Calu3 (cell line): ENCODE measurements at regions of chr17 and their contacts with region 1.

Region 1: GRCh38 chr17:6279659-6280058 is 155.3 kb downstream of the AIPL1 start:
- DNase-seq: peak; percentile 55
- H3K4me3 Mint-ChIP-seq: no peak overlapping the region
- H3K27ac Mint-ChIP-seq: no peak overlapping the region
- H3K4me1 Mint-ChIP-seq: no peaks in the 10 kb centered on the region
- H3K27me3 Mint-ChIP-seq: peaks cover 90% of the 10 kb centered on the region
- CTCF ChIP-seq: no peak

Region 2: DNA sequence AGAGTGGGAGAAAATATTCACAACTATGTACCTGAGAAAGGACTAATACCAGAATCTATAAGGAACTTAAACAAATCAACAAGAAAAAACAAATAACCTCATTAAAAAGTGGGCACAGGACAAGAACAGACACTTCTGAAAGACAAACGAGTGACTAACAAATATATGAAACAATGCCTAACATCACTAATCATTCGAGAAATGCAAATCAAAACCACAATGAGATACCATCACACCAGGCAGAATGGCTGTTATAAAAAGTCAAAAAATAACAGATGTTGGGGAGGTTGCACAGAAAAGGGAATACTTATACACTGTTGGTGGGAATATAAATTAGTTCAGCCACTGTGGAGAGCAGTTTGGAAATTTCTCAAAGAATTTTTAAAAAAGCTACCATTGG is 293.0 kb before region 1 on chr17:
- CTCF ChIA-PET with region 1: no interaction called
- intact Hi-C with region 1: no loop called
- DNase-seq: no peak
- H3K4me3 Mint-ChIP-seq: no peak overlapping the region
- H3K27ac Mint-ChIP-seq: no peak overlapping the region
- H3K4me1 Mint-ChIP-seq: no peaks in the 10 kb centered on the region
- H3K27me3 Mint-ChIP-seq: peaks cover 36% of the 10 kb centered on the region
- CTCF ChIP-seq: no peak

Region 3: GRCh38 chr17:6413065-6413464 is 133.4 kb after region 1 on chr17:
- CTCF ChIA-PET with region 1: no interaction called
- intact Hi-C with region 1: loop called (anchors 2 kb)
- DNase-seq: no peak
- H3K4me3 Mint-ChIP-seq: no peak overlapping the region
- H3K27ac Mint-ChIP-seq: no peak overlapping the region
- H3K4me1 Mint-ChIP-seq: no peaks in the 10 kb centered on the region
- H3K27me3 Mint-ChIP-seq: peaks cover 98% of the 10 kb centered on the region
- CTCF ChIP-seq: peak; percentile 30